CD4-positive, alpha-beta T cell (primary cell): ENCODE measurements at regions of chr5 and their contacts with region 1.

Region 1: DNA sequence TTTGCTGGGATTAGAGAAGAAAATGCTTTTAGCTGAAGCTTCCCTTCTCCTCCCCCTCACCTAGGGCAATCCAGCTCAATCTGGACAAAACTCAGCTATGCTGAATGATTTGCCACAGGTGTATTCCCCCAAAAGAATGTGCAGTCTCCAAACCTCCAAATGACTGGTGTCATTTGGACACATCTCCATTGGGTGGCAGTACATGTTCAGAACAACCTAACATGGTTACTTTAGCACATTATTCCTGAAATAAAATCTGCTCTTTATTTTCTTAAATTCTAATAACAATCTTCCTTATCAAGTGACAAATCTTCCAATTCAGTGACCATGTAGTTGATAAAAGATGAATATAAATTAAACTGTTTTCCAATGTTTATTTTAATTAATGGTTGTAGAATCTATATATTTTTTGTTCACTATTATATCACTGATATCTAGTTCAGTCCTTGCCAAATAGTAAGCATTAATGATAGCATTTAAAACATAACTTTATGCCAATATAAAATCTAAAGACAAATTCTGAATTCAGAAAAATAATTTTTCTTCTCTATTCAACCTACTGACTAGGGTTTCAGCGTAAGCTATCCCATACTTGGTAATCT is 61.3 kb upstream of the MOCS2 start:
- DNase-seq: peak in 3 of 14 experiments; percentile 15 to 20 (median 18)
- ATAC-seq: no peak
- H3K4me3 ChIP-seq: no peak overlapping the region
- H3K4me3 Mint-ChIP-seq: no peak overlapping the region
- H3K27ac ChIP-seq: no peak overlapping the region
- H3K27ac Mint-ChIP-seq: no peak overlapping the region
- H3K4me1 ChIP-seq: no peaks in the 10 kb centered on the region
- H3K4me1 Mint-ChIP-seq: no peaks in the 10 kb centered on the region
- H3K27me3 ChIP-seq: peaks cover 0 to 4% of the 10 kb centered on the region in 2 experiments
- H3K27me3 Mint-ChIP-seq: peaks cover 43% of the 10 kb centered on the region
- CTCF ChIP-seq: peak; percentile 49

Region 2: GRCh38 chr5:54217826-54218503 is 1047.1 kb after region 1 on chr5:
- CTCF ChIA-PET with region 1: no interaction called
- POLR2A ChIA-PET with region 1: no interaction called
- intact Hi-C with region 1: loop called in 1 of 2 experiments (anchors 2 kb)
- DNase-seq: peak in 4 of 14 experiments; percentile 10 to 55 (median 50)
- ATAC-seq: no peak
- H3K4me3 ChIP-seq: no peak overlapping the region
- H3K4me3 Mint-ChIP-seq: no peak overlapping the region
- H3K27ac ChIP-seq: no peak overlapping the region
- H3K27ac Mint-ChIP-seq: no peak overlapping the region
- H3K4me1 ChIP-seq: no peaks in the 10 kb centered on the region
- H3K4me1 Mint-ChIP-seq: peaks cover 16% of the 10 kb centered on the region
- H3K27me3 ChIP-seq: no peaks in the 10 kb centered on the region
- H3K27me3 Mint-ChIP-seq: no peaks in the 10 kb centered on the region
- CTCF ChIP-seq: peak; percentile 69